GM10248 (cell line): ENCODE measurements at regions of chr4 and their contacts with region 1.

Region 1: DNA sequence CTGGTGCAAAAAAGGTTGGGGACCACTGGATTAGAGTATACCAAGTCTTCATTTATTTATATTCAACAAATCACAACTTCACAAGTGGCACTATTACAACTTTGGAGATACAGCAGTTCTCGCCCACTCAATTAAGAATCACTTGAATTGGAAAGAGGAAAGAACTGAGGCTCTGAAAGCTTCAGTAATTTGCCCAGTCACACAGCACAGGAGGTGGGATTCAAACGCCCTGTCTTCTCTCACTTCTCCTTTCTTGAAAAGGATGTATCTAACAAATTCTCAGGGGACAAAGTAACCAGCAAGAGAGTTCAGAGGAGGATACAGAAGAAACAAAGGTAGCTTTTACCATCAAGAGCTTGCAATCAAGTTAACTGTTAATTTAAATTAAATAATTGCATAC is 12.4 kb downstream of the SMIM14 start:
- DNase-seq: peak; percentile 61
- CTCF ChIP-seq: no peak

Region 2: DNA sequence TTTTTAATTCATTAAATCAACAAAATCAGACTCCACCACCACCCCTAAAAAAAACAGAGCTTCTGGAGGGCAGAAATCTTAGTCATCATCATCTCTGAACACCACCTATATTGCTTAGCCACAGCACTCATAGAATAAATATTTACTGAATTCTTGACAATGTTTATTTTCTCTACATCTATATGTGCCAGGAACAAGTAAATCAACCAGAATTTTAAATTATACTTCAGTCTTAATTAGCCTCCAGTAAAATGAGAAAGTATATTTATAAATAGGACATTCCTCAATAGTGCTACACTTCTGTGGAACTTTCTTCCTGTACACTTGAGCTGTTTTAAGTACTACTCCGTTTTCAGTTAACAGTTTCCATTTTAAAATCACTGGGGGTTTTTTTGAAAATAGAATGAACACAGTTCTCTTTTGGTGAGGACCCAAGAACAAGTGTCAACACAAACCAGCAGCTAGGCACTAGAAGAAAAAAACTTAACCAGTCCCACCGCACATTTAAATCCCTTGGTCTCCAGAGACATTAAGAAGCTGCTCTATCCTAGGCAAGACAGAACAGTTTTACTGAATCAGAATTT is 13.1 kb before region 1 on chr4:
- CTCF ChIA-PET with region 1: interaction called, 26 read pairs
- POLR2A ChIA-PET with region 1: no interaction called
- DNase-seq: peak; percentile 40
- CTCF ChIP-seq: no peak

Region 3: GRCh38 chr4:39713691-39714090 is 87.4 kb after region 1 on chr4:
- CTCF ChIA-PET with region 1: no interaction called
- POLR2A ChIA-PET with region 1: no interaction called
- DNase-seq: peak; percentile 19
- CTCF ChIP-seq: no peak